Lower leg skin (tissue), 4 donors: ENCODE measurements at regions of chr11 and their contacts with region 1.

Region 1: GRCh38 chr11:105891685-105892084 is 130.4 kb downstream of the MSANTD4 start:
- DNase-seq: no peak
- H3K4me3 ChIP-seq: no peak overlapping the region
- CTCF ChIP-seq: no peak
- POLR2A ChIP-seq: no peak

Region 2: GRCh38 chr11:106913141-106913540 is 1021.5 kb after region 1 on chr11:
- intact Hi-C with region 1: loop called (anchors 5 kb)
- DNase-seq: no peak
- H3K4me3 ChIP-seq: no peak overlapping the region
- CTCF ChIP-seq: no peak
- POLR2A ChIP-seq: no peak